MCF 10A (cell line): ENCODE measurements at regions of chr3 and their contacts with region 1.

Region 1: DNA sequence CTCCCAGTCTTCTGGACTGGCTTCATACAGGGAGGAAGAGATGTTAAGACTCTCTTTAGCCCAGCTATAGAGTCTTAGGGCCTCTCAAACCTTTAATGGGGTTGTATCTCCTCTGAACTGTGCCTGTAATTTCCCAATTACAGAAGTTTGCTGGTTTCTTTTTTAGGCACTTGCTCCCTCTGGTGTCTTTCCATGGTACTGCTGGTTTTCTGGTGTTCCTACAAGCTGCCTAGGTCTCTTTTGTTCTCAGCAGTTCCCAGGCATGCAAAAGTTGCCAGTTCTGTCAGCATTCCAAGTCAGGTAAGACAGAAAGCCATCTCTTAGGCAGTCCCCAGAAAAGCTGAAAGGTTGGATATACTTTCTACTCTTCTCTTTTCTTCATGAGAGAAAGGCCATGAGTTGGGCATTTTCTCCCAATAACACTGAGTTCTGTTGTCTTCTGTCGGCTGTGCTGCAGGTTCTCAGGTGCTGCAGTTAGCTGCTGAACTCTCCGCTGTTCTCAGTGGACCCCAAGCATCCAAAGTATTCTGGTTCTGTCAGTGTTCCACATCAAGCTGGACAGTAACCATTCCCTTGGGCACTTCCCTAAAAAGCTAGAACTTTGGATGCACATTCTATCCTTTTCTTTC is 54.4 kb upstream of the EHHADH start:
- DNase-seq: peak; percentile 75
- H3K4me3 Mint-ChIP-seq: no peak overlapping the region
- H3K27ac Mint-ChIP-seq: no peak overlapping the region
- H3K4me1 Mint-ChIP-seq: peaks cover 1% of the 10 kb centered on the region
- H3K27me3 Mint-ChIP-seq: no peaks in the 10 kb centered on the region
- CTCF ChIP-seq: peak; percentile 67

Region 2: DNA sequence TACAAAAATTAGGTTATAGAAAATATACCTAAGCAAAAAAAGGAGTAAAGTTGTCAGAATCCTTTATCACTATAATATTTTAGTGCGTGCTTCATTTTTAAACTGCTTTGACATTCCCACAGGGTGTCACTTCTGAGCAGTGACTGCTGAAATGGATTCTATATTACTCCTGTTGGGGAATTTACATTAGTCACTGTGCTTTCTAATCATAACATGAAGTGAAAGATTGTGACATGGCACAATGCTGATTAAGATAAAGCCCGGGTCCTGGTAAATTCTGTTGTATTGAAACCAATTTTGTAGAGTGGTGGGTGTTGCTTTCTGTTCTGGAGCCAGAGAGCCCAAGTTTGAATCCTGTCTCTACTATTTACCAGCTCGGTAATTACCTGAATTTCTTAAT is 18.0 kb before region 1 on chr3:
- CTCF ChIA-PET with region 1: interaction called, 23 read pairs
- POLR2A ChIA-PET with region 1: interaction called, 4 read pairs
- intact Hi-C with region 1: no loop called
- DNase-seq: no peak
- H3K4me3 Mint-ChIP-seq: no peak overlapping the region
- H3K27ac Mint-ChIP-seq: no peak overlapping the region
- H3K4me1 Mint-ChIP-seq: no peaks in the 10 kb centered on the region
- H3K27me3 Mint-ChIP-seq: no peaks in the 10 kb centered on the region
- CTCF ChIP-seq: no peak